HCT116 (cell line): ENCODE measurements at regions of chr10 and their contacts with region 1.

Region 1: GRCh38 chr10:50367732-50368131 is 116.4 kb upstream of the ASAH2 start:
- DNase-seq: peak; percentile 31
- ATAC-seq: peak; percentile 91
- H3K4me3 ChIP-seq: no peak overlapping the region
- H3K27ac ChIP-seq: no peak overlapping the region
- H3K4me1 ChIP-seq: peaks cover 0 to under 1% of the 10 kb centered on the region in 2 experiments; a peak in 1 of 4 replicates
- H3K27me3 ChIP-seq: no peaks in the 10 kb centered on the region
- CTCF ChIP-seq: peak; percentile 48 to 70 (median 57); a peak in 5 of 6 replicates
- POLR2A ChIP-seq: no peak
- RAD21 ChIP-seq: peak; percentile 62

Region 2: GRCh38 chr10:50381642-50382041 is 13.9 kb after region 1 on chr10:
- CTCF ChIA-PET with region 1: interaction called, 10 read pairs
- POLR2A ChIA-PET with region 1: no interaction called
- RAD21 ChIA-PET with region 1: no interaction called
- intact Hi-C with region 1: no loop called
- DNase-seq: no peak
- ATAC-seq: no peak
- H3K4me3 ChIP-seq: no peak overlapping the region
- H3K27ac ChIP-seq: no peak overlapping the region
- H3K4me1 ChIP-seq: no peaks in the 10 kb centered on the region
- H3K27me3 ChIP-seq: no peaks in the 10 kb centered on the region
- CTCF ChIP-seq: no peak
- POLR2A ChIP-seq: no peak
- RAD21 ChIP-seq: no peak

Region 3: GRCh38 chr10:50417886-50418830 is 50.4 kb after region 1 on chr10:
- CTCF ChIA-PET with region 1: interaction called, 7 read pairs
- POLR2A ChIA-PET with region 1: no interaction called
- RAD21 ChIA-PET with region 1: interaction called in 1 of 2 experiments, 3 read pairs
- intact Hi-C with region 1: loop called (anchors 5 kb)
- DNase-seq: peak; percentile 86
- ATAC-seq: peak; percentile 93
- H3K4me3 ChIP-seq: peak overlapping the region; percentile 60 to 81
- H3K27ac ChIP-seq: peak overlapping the region; percentile 74
- H3K4me1 ChIP-seq: peaks cover 11 to 40% of the 10 kb centered on the region in 2 experiments
- H3K27me3 ChIP-seq: no peaks in the 10 kb centered on the region
- CTCF ChIP-seq: no peak
- POLR2A ChIP-seq: no peak
- RAD21 ChIP-seq: peak; percentile 27

Region 4: GRCh38 chr10:50452603-50453002 is 84.9 kb after region 1 on chr10:
- CTCF ChIA-PET with region 1: no interaction called
- POLR2A ChIA-PET with region 1: no interaction called
- RAD21 ChIA-PET with region 1: no interaction called
- intact Hi-C with region 1: no loop called
- DNase-seq: no peak
- ATAC-seq: no peak
- H3K4me3 ChIP-seq: no peak overlapping the region
- H3K27ac ChIP-seq: no peak overlapping the region
- H3K4me1 ChIP-seq: peaks cover 0 to 17% of the 10 kb centered on the region in 2 experiments; a peak in 2 of 4 replicates
- H3K27me3 ChIP-seq: no peaks in the 10 kb centered on the region
- CTCF ChIP-seq: no peak
- POLR2A ChIP-seq: no peak
- RAD21 ChIP-seq: no peak